ENCODE measurements at regions of chr12 and their contacts with region 1.

Region 1: DNA sequence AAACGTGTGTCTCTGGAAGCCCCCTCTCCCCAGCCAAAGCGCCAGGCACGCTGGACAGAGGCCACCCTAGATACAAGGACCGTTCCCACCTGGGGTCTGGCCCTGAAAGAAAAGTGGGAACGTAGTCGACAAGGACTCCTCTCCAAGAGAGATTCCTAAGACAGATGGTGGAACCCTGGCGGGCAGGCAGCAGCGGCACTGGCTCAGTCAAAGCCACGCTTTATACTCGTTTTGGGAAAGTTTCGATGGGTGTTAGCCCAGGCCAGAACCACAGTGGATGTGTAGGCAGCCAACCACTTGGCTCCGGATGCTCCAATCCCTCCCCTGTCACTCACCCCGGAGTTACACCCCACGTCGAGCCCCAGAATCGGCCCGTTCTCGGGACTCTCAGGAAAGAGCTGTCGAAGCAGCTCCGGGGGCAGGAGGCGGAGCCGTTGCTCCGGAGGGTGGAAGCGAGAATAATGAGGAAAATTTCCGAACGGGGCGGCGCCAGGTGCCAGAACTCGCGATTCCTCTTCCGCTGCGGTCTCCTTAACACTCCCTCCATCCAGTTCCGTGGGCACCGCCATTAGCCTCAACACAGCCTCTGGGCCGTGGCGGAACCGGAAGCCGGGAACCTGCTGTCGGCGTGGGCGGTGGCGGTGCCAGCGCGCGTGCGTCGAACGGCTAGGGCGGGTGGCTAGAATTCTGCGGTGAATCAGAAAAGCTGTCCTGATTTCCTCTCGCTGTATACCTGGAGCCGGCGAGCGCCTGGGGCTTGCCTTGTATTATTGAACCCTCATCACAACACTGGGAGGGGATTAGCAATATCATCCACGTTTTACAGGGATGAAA is at the start of gene BCDIN3D:
- DNase-seq: peak; percentile 98
- H3K4me3 Mint-ChIP-seq: peak within 1 kb of the TSS; percentile 96
- H3K27ac Mint-ChIP-seq: peak within 1 kb of the TSS; percentile 94
- H3K4me1 Mint-ChIP-seq: peaks cover 31% of the 10 kb centered on the region
- H3K27me3 Mint-ChIP-seq: peaks cover 2% of the 10 kb centered on the region
- total RNA-seq, gene BCDIN3D: 2.9 and 3.5 TPM in 2 replicates

Region 2: DNA sequence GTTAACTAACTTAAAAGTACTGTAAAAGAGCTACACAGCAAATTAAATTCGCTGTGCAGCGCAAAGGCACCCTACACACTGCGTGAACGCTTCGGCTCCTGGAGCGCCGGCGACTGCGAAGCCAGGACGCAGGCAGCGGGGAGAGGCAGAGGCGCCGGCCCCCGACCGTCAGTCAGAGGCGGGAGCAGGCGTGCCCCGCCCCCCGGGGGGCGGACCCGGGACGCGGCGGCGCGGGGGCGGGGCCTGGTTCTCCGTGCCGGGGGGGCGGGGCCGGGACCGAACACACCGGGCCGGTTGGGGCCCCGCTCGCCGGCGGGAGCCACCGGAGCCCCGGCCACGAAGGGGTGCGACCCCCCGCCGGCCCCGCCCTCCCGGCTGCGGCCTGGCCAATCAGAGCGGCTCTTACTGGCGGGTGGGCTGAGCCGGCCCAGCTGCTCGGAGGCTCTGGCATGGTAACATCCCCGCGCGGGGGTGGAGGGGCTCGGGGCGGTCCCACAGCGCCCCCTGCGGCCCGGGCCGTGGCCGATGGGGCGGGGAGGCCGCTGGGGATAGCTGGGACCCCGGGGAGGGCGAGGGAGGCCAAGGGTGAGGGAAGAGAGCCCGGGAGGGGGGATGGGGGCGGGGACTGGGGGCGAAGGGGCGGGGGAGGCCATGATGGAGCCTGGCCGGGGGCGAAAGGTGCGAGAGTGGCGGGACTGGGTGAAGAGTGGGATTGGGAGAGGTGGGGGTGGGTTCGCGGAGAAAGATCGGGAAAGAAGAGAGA is 219.4 kb before region 1 on chr12 and contains the start of gene PRPF40B:
- intact Hi-C with region 1: loop called (anchors 5 kb)
- DNase-seq: peak; percentile 95
- H3K4me3 Mint-ChIP-seq: peak within 1 kb of the TSS; percentile 83
- H3K27ac Mint-ChIP-seq: peak within 1 kb of the TSS; percentile 84
- H3K4me1 Mint-ChIP-seq: peaks cover 24% of the 10 kb centered on the region
- H3K27me3 Mint-ChIP-seq: peaks cover 30% of the 10 kb centered on the region
- total RNA-seq, gene PRPF40B: 12.3 and 12.7 TPM in 2 replicates

Region 3: DNA sequence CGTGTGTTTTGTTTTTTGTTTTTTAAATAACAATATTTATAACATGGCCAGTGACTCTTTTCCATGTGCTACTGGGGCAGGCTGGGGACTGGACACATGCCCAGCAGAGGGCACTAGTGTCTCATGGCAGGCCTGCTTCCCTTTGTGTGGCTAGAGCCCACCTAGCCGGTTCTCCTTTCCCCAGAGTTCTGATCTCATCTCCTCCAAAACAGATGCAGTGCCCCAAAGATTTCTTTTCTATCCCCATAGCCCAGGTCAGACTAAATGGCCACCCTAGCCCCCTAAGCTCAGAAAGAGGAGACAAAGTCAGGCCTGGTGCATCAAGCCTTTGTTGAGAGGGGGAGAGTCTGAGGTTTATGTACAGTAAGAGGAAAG is 198.1 kb before region 1 on chr12:
- intact Hi-C with region 1: loop called (anchors 5 kb)
- DNase-seq: peak; percentile 94
- H3K4me3 Mint-ChIP-seq: no peak overlapping the region
- H3K27ac Mint-ChIP-seq: peak overlapping the region; percentile 70
- H3K4me1 Mint-ChIP-seq: peaks cover 29% of the 10 kb centered on the region
- H3K27me3 Mint-ChIP-seq: no peaks in the 10 kb centered on the region

Region 4: DNA sequence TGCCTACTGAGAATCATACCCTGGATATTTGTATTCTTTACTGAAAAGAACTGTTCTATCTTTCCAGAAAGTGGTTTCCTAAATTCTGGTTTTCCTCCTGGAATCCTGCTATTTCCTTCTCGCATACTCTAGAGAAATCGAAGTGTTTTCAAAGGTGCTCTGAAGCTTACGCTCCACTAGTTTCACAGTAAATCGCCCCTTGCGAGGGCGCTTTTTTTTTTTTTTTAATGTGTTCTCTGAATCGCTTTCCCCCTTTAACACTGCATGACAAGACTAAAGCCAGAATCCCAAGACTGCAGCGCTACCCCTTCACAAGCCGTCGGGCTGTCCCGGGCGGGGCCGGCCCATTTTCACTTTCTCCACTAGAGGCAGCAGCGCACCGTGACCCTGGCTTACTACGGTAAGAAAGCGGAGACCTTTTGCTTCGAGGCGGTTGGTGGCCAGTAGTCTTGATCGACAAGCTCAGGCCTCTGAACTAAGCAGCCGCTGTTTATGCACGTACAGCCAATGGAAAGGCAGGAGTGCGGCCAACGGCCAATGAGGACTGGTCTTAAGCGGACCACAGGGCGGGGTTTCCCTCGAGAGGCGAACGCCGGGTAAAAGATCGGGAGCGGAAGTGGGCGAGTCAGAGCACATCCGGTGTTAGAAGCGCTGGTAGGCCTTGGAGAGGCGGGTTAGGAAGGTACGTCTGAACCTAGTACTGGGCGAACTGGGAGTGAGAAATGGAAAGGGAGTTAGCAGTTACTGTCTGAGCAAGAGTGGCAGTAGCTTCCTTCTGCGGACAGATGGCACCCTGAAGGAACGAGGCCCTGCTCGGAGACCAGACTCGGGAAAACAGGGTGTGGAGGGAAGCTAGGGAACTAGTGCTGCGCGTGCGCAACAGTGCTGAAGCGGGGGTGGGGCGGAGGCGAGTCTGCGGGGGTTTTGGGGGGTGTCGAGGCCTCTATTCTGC is 101.5 kb before region 1 on chr12 and contains the start of gene TMBIM6:
- intact Hi-C with region 1: loop called (anchors 1 kb)
- DNase-seq: peak; percentile 100
- H3K4me3 Mint-ChIP-seq: peak within 1 kb of the TSS; percentile 90
- H3K27ac Mint-ChIP-seq: peak within 1 kb of the TSS; percentile 95
- H3K4me1 Mint-ChIP-seq: peaks cover 31% of the 10 kb centered on the region
- H3K27me3 Mint-ChIP-seq: peaks cover 5% of the 10 kb centered on the region
- total RNA-seq, gene TMBIM6: 370 and 372 TPM in 2 replicates

Region 5: GRCh38 chr12:49776413-49776812 is 66.3 kb before region 1 on chr12:
- intact Hi-C with region 1: loop called (anchors 1 kb)
- DNase-seq: peak; percentile 87
- H3K4me3 Mint-ChIP-seq: no peak overlapping the region
- H3K27ac Mint-ChIP-seq: no peak overlapping the region
- H3K4me1 Mint-ChIP-seq: peaks cover 11% of the 10 kb centered on the region
- H3K27me3 Mint-ChIP-seq: peaks cover 20% of the 10 kb centered on the region

Region 6: DNA sequence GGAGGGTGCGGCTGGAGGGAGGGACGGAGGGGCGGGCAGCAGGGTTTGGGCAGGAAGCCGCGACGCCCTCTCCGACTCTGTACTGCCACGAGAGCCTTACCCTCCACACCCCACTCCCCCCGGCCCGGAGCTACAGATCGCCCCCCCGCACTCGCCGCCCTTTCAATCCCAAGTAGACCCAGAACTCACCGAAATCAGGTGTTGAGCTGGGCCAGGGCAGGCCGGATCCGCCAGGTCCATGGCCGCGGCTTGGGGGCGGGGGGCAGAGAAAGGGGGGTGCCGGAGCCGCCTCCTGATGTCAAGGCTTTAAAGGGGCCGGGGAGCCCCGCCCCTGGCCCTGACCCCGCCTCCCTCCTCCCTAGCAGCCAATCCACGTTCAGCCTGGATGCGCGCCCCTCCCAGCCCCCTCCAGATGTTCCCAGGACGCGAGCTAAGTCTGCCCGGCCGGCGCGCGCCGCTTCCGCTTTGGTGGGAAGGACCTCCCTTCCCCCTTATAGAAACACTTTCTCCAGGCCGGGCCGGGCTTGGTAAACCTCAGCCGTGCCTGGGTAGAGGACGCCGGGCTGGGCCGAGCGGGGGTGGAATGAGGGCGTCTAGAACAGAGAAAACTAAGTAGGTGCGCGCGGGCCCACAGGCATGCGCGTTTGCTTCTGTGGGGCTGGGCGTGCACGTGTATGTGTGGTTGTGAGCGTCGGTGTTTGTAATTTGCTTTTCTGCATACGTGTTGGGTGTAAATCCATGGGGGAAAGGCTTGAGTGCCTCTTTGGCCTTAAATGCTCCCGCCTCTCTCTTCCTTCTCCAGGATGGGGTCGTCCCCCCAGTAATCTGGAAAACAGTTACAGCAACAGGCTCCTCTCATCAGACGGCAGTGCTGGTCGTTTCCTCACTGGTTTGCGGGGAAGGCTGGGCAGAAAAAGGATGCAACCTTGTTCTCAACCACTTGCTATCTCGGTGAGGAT is 14.3 kb before region 1 on chr12 and contains the start of gene NCKAP5L:
- intact Hi-C with region 1: loop called (anchors 1 kb)
- DNase-seq: peak; percentile 97
- H3K4me3 Mint-ChIP-seq: peak within 1 kb of the TSS; percentile 100
- H3K27ac Mint-ChIP-seq: peak within 1 kb of the TSS; percentile 95
- H3K4me1 Mint-ChIP-seq: peaks cover 16% of the 10 kb centered on the region
- H3K27me3 Mint-ChIP-seq: peaks cover 18% of the 10 kb centered on the region
- total RNA-seq, gene NCKAP5L: 4.8 and 5.0 TPM in 2 replicates

Region 7: GRCh38 chr12:50103767-50104321 is 261.1 kb after region 1 on chr12 and contains the start of gene GPD1:
- intact Hi-C with region 1: no loop called
- DNase-seq: no peak
- H3K4me3 Mint-ChIP-seq: no peak within 1 kb of the TSS
- H3K27ac Mint-ChIP-seq: no peak within 1 kb of the TSS
- H3K4me1 Mint-ChIP-seq: peaks cover 3% of the 10 kb centered on the region
- H3K27me3 Mint-ChIP-seq: no peaks in the 10 kb centered on the region
- total RNA-seq, gene GPD1: 0.62 and 0.91 TPM in 2 replicates